ENCODE measurements at regions of chr18 and their contacts with region 1.

Region 1: DNA sequence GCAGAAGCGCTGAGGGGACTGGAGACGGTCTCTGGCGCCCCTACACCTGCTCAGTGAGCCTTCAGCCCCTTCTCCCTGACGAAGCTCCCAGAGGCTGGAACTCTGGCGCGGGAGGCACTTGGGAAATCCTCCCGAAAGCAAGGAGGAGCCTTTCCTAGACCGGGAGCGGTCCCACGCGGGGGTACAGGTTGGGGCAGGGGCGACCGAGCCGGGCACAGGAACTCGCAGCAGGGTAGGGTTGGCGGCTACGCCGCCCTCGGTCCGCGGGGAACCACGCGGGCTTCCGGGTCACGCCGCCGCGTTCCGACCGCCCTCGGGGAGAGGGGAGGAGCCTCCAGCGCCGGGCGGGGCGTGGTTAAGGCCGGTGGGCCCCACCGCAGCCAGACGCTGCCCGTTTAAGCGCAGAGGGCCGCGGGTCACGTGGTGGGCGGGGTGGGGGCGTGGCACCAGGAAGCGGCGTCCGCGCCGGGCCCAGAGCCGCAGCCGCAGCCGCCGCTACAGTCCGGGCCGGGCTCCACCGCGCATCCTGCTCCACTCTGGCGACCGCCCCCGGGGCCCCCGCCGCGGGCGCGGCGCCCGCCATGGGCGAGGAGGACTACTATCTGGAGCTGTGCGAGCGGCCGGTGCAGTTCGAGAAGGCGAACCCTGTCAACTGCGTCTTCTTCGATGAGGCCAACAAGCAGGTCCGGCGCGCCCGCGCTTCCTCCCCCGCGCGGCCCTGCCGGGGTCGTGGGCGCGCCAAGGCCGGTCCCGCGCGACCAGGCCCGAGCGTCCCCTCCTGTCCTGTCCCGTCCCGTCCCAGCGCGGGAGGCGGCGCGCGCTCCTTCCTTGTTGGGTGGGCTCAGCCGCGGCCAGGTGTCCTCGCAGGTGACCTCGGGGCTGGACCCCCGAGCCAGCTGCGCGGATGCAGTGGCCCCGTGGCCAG is at the start of gene RMC1:
- DNase-seq: peak; percentile 96
- H3K4me3 Mint-ChIP-seq: peak within 1 kb of the TSS; percentile 95
- H3K27ac Mint-ChIP-seq: peak within 1 kb of the TSS; percentile 85
- H3K4me1 Mint-ChIP-seq: peaks cover 44% of the 10 kb centered on the region
- H3K27me3 Mint-ChIP-seq: no peaks in the 10 kb centered on the region
- total RNA-seq, gene RMC1: 42.9 and 50.5 TPM in 2 replicates

Region 2: GRCh38 chr18:22933206-22933957 is 569.9 kb before region 1 on chr18 and contains the start of gene RBBP8:
- intact Hi-C with region 1: loop called (anchors 5 kb)
- DNase-seq: peak; percentile 84
- H3K4me3 Mint-ChIP-seq: peak within 1 kb of the TSS; percentile 97
- H3K27ac Mint-ChIP-seq: peak within 1 kb of the TSS; percentile 93
- H3K4me1 Mint-ChIP-seq: peaks cover 39% of the 10 kb centered on the region
- H3K27me3 Mint-ChIP-seq: no peaks in the 10 kb centered on the region
- total RNA-seq, gene RBBP8: 92.8 and 94.5 TPM in 2 replicates

Region 3: GRCh38 chr18:23487738-23488570 is 15.3 kb before region 1 on chr18:
- intact Hi-C with region 1: loop called (anchors 1 kb)
- DNase-seq: peak; percentile 38
- H3K4me3 Mint-ChIP-seq: peak overlapping the region; percentile 65
- H3K27ac Mint-ChIP-seq: peak overlapping the region; percentile 87
- H3K4me1 Mint-ChIP-seq: peaks cover 12% of the 10 kb centered on the region
- H3K27me3 Mint-ChIP-seq: no peaks in the 10 kb centered on the region

Region 4: DNA sequence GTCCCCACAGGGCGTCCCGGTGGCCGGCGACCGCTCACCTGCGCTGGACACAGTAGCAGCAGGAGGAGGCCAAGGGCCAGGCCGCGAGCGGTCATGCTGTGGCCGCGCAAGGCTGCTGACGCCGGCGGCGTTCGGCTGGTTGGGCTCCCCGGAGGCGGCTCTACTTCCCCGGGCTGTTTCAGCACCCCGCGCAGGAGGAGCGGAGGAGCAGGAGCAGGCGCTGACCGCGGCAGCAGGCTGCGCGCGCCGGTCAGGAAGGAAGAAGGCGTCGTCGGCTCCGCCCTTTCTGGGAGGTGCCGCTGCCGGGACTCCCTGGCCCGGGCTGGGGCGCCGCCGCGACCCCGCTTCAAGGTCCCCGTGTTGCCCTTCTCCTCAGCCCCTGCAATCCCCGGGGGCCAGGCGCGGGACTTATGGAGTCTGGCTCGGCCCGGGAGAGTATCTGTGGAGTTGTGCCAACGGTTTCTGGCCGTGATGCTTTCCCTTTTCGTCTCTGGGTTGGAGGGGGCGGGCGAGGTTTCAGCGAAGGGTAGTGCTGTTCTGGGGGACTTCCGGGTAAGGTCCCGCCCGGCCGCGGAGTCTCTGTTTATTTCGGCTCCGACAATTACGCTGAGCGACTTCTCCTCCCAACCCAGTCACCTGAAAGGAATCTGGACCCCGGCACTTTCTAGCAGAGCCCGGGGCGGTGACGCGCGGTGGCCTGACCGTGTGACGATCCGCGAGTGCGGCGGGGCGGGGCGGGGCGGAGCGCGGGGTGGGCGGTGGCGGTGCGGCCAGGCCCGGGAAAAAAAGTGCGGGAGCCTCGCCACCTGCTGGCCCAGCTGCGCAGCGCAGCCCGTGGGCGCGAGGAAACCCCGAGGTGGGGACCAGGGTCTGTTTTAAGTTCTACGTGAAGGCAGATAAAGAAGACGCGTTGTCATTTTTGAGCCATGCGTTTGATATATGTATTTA is 83.2 kb after region 1 on chr18 and contains the start of gene NPC1:
- intact Hi-C with region 1: loop called (anchors 1 kb)
- DNase-seq: peak; percentile 92
- H3K4me3 Mint-ChIP-seq: peak within 1 kb of the TSS; percentile 92
- H3K27ac Mint-ChIP-seq: peak within 1 kb of the TSS; percentile 94
- H3K4me1 Mint-ChIP-seq: peaks cover 39% of the 10 kb centered on the region
- H3K27me3 Mint-ChIP-seq: peaks cover 5% of the 10 kb centered on the region
- total RNA-seq, gene NPC1: 29.0 and 31.4 TPM in 2 replicates

Region 5: GRCh38 chr18:23812546-23813440 is 309.5 kb after region 1 on chr18:
- intact Hi-C with region 1: loop called (anchors 1 kb)
- DNase-seq: no peak
- H3K4me3 Mint-ChIP-seq: no peak overlapping the region
- H3K27ac Mint-ChIP-seq: no peak overlapping the region
- H3K4me1 Mint-ChIP-seq: peaks cover 12% of the 10 kb centered on the region
- H3K27me3 Mint-ChIP-seq: peaks cover 17% of the 10 kb centered on the region

Region 6: GRCh38 chr18:23924813-23925212 is 421.5 kb after region 1 on chr18:
- intact Hi-C with region 1: loop called (anchors 5 kb)
- DNase-seq: no peak
- H3K4me3 Mint-ChIP-seq: no peak overlapping the region
- H3K27ac Mint-ChIP-seq: no peak overlapping the region
- H3K4me1 Mint-ChIP-seq: peaks cover 23% of the 10 kb centered on the region
- H3K27me3 Mint-ChIP-seq: peaks cover 12% of the 10 kb centered on the region

Measured in activated T-helper 2 cell treated with anti-CD3 and anti-CD28 coated beads, Interferon-gamma antibody, Interleukin-2, Interleukin-4, amounts not matched to agents 10 μg/mL and 5 μg/mL and 100 μg/mL, durations not matched to agents 14 hours and 24 hours and 36 hours (primary cell).